HepG2 (cell line): ENCODE measurements at regions of chr5 and their contacts with region 1.

Region 1: GRCh38 chr5:99032234-99033013 is 103.6 kb upstream of the CHD1 start:
- DNase-seq: peak; percentile 74
- ATAC-seq: peak; percentile 89
- H3K4me3 ChIP-seq: peak overlapping the region; percentile 50 to 69 (median 63)
- H3K27ac ChIP-seq: no peak overlapping the region
- H3K4me1 ChIP-seq: peaks cover 31% of the 10 kb centered on the region
- H3K27me3 ChIP-seq: no peaks in the 10 kb centered on the region
- CTCF ChIP-seq: peak; percentile 91
- EP300 ChIP-seq: no peak
- POLR2A ChIP-seq: no peak
- RAD21 ChIP-seq: peak; percentile 85

Region 2: DNA sequence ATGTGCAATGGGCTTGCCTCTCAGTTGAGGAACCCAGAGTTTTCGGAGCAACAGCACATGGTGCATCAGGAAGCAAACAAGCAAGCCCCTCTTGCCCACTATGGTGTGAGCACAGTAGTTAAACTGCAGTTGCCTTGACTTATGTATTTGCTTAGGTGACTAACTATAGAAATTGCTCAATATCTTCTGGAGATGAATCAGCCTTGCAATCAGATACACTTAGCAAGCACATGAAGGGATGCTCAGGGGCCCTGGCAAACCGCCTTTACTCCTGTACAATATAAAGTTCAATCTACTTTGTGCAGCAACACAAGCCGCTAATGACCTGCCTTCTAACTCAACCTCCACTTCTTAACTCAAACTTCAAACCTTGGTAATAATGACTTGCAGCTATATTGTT is 1267.7 kb before region 1 on chr5:
- CTCF ChIA-PET with region 1: no interaction called
- POLR2A ChIA-PET with region 1: no interaction called
- in situ Hi-C with region 1: no loop called
- intact Hi-C with region 1: no loop called
- DNase-seq: peak; percentile 8
- ATAC-seq: no peak; the same call in 2 of the 3 replicates
- H3K4me3 ChIP-seq: no peak overlapping the region
- H3K27ac ChIP-seq: no peak overlapping the region
- H3K4me1 ChIP-seq: no peaks in the 10 kb centered on the region
- H3K27me3 ChIP-seq: no peaks in the 10 kb centered on the region
- CTCF ChIP-seq: no peak
- EP300 ChIP-seq: no peak
- POLR2A ChIP-seq: no peak
- RAD21 ChIP-seq: no peak

Region 3: DNA sequence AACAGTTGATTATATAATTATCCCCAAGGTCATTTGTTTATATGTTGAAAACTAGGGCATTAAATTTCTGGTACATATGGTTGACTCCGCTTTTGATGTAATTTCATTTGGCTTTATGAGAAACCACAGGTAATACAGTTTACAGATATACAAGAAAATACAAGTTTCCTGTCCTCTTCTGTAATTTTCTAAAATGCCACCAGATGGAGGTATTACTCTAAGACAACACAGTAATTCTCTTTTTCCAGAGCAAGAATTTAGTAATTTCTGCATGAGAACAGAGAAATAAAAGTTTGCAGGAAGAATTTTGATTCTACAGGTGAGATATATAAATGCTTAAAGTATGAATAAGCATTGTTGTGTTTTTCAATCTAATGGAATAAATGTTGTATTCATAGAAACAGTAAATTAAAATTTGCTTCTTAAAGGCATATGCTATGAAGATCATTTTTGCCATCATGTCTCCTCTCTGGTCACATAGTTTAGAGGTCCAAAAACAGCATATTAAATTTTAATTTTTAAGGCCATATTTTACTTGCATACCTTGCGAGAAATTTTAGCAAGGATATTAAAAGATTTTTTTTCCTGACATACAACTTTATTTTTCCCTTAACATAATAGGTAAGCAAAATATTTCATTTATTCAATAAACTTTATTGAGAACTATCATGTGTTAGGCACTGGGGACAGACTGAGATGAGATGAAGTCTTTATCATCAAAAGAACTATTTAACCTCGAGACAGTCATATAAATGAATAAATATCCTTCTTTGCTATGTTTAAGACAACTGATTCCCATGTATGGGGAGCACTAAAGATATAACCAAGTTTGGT is 126.3 kb before region 1 on chr5:
- CTCF ChIA-PET with region 1: interaction called, 66 read pairs
- POLR2A ChIA-PET with region 1: no interaction called
- in situ Hi-C with region 1: loop called (anchors 5 kb)
- intact Hi-C with region 1: loop called (anchors 1 kb)
- DNase-seq: peak; percentile 44
- ATAC-seq: peak; percentile 26; the same call in 1 of the 3 replicates
- H3K4me3 ChIP-seq: no peak overlapping the region
- H3K27ac ChIP-seq: no peak overlapping the region
- H3K4me1 ChIP-seq: no peaks in the 10 kb centered on the region
- H3K27me3 ChIP-seq: no peaks in the 10 kb centered on the region
- CTCF ChIP-seq: peak; percentile 56
- EP300 ChIP-seq: no peak
- POLR2A ChIP-seq: no peak
- RAD21 ChIP-seq: peak; percentile 56; the same call in 1 of the 2 replicates

Region 4: GRCh38 chr5:99010294-99010693 is 22.1 kb before region 1 on chr5:
- CTCF ChIA-PET with region 1: no interaction called
- POLR2A ChIA-PET with region 1: no interaction called
- in situ Hi-C with region 1: no loop called
- intact Hi-C with region 1: no loop called
- DNase-seq: no peak
- ATAC-seq: no peak
- H3K4me3 ChIP-seq: no peak overlapping the region
- H3K27ac ChIP-seq: no peak overlapping the region
- H3K4me1 ChIP-seq: peaks cover 10% of the 10 kb centered on the region
- H3K27me3 ChIP-seq: no peaks in the 10 kb centered on the region; a peak in 2 of 5 replicates
- CTCF ChIP-seq: no peak
- EP300 ChIP-seq: no peak
- POLR2A ChIP-seq: no peak
- RAD21 ChIP-seq: no peak